Left colon (tissue), 2 donors: ENCODE measurements at regions of chr5 and their contacts with region 1.

Region 1: GRCh38 chr5:9361835-9362234 is 184.0 kb downstream of the SEMA5A start:
- DNase-seq: peak; percentile 38 to 61
- ATAC-seq: peak; percentile 75

Region 2: DNA sequence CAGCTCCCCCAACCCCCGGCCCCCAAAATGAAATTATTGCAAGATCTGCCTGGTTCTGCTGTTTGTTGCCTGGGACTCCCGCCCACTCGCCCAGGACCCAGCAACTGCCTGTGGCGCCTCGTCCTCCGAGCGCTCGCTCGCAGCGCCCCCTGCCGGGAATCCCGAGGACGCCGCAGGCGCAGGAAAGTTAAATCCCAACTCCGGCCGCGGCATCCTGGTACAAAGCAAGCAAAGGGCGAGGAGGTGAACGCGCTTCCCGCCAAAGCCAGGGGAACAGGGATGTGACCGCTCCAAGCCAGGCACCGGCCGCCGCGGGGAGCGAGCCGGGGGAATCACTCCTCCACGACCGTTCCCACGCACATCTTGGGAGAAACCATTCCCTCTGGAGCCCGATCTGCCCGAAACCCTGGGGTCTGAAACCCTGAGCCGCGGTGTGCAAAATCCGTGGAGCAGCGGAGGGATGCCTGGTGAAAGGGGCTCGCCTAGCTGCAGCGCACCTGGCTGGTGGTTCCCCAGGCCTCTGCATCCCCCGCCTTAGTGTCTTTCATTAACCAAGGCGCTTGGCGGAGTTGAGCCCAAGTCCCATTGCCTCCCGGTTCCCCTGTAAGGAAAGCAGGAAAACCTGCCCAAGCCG is 182.8 kb after region 1 on chr5:
- intact Hi-C with region 1: loop called in 1 of 2 experiments (anchors 10 kb)
- DNase-seq: peak; percentile 79 to 89
- ATAC-seq: peak; percentile 60